ENCODE measurements at regions of chr17 and their contacts with region 1.

Region 1: DNA sequence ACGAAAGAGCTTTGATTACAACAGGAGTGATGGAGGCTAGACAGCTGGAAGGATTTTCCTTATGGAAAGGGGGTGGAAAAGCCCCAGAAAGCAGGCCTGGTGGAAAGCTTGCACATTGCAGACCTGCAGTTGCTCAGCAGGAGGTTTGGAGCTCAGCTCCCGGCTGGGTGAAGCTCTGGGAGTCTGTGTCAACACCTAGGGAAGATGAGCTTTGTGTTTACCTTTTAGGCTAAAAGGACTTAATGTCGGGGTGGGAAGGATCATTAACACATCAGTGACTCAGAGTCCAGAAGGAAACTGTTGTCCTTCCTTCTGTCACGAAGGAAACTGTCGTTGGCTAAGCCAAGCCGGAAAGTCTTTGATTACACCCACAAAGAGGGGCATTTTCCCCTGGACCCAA is 48.2 kb downstream of the RAP1GAP2 start:
- DNase-seq: no peak
- ATAC-seq: no peak
- H3K4me3 ChIP-seq: no peak overlapping the region
- H3K4me3 Mint-ChIP-seq: no peak overlapping the region
- H3K27ac ChIP-seq: no peak overlapping the region
- H3K27ac Mint-ChIP-seq: no peak overlapping the region
- H3K4me1 ChIP-seq: no peaks in the 10 kb centered on the region
- H3K4me1 Mint-ChIP-seq: peaks cover 11% of the 10 kb centered on the region
- H3K27me3 ChIP-seq: no peaks in the 10 kb centered on the region
- H3K27me3 Mint-ChIP-seq: peaks cover 3% of the 10 kb centered on the region
- CTCF ChIP-seq: no peak

Region 2: DNA sequence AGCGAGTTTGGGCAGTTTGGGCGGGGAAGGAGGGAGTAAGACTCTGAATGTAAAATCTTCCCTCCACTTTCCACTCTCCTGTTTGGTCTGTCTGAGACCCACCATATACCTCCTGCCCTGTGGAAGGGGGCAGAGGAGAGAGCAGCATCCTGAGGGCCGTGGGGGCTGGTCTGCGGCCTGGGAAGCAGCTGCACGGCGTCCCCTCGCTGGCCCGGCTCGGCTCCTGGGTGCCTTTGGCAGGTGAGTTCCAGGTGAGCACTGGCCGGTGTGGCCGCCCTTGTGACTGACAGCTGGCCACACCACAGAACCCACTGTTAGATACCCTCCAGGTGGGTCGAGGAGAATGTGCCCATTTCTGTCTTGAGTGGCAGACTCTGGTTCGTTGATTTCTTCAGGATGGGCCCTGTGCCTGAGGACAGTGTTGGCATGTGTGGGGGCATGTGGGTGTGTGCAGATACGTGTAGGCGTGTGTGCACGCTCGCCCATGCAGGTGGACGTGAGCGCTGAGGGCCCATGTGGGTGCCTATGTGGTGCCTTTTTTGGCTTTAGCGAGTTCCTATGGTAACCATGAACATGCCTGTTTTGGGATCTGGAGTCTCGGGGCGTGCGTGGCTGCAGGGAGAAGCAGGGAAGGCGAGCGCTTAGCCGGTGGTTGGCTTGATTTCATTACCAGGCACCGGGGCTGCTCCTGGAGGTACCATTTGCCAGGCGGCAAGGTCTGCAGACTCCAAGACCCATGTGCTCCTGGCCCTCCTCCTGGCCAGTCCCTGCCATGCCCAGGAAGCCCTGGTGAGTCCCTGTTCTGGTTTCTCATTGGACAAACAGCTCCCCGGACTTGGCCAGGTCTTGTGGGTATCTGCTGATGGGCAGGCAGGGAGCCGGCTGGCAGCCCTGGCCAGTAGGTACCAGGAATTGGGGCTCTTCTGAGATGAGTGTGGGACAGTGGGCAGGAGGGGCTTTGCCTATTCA is 35.8 kb before region 1 on chr17:
- CTCF ChIA-PET with region 1: no interaction called
- POLR2A ChIA-PET with region 1: no interaction called
- intact Hi-C with region 1: no loop called
- DNase-seq: no peak
- ATAC-seq: no peak
- H3K4me3 ChIP-seq: no peak overlapping the region
- H3K4me3 Mint-ChIP-seq: no peak overlapping the region
- H3K27ac ChIP-seq: no peak overlapping the region
- H3K27ac Mint-ChIP-seq: no peak overlapping the region
- H3K4me1 ChIP-seq: peaks cover 3% of the 10 kb centered on the region
- H3K4me1 Mint-ChIP-seq: peaks cover 25% of the 10 kb centered on the region
- H3K27me3 ChIP-seq: no peaks in the 10 kb centered on the region
- H3K27me3 Mint-ChIP-seq: no peaks in the 10 kb centered on the region
- CTCF ChIP-seq: no peak

Region 3: DNA sequence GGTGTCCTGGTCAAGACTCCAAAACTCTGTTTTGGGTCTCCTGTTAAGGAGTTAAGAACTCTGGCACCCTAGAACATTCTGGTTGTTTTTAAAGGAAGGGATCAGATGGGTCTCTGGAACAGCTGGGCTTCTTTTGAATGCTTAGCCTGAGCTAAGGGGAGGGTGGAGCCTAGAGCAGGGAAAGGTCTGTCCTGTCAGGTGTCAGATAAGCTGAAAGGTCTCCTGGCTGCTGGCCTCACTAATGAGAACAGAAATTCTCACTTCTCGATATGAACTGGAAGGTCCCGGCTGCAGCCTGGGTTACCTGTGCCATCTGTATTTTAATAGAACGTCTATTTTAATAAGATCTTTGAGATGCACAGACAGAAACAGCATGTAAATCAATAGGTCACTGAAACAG is 20.8 kb after region 1 on chr17:
- CTCF ChIA-PET with region 1: interaction called, 10 read pairs
- POLR2A ChIA-PET with region 1: interaction called, 3 read pairs
- intact Hi-C with region 1: no loop called
- DNase-seq: no peak
- ATAC-seq: no peak
- H3K4me3 ChIP-seq: no peak overlapping the region
- H3K4me3 Mint-ChIP-seq: no peak overlapping the region
- H3K27ac ChIP-seq: no peak overlapping the region
- H3K27ac Mint-ChIP-seq: no peak overlapping the region
- H3K4me1 ChIP-seq: no peaks in the 10 kb centered on the region
- H3K4me1 Mint-ChIP-seq: peaks cover 3% of the 10 kb centered on the region
- H3K27me3 ChIP-seq: no peaks in the 10 kb centered on the region
- H3K27me3 Mint-ChIP-seq: no peaks in the 10 kb centered on the region
- CTCF ChIP-seq: no peak

Region 4: GRCh38 chr17:2929881-2930533 is 85.6 kb after region 1 on chr17:
- CTCF ChIA-PET with region 1: interaction called, 12 read pairs
- POLR2A ChIA-PET with region 1: no interaction called
- intact Hi-C with region 1: loop called in 1 of 2 experiments (anchors 1 kb)
- DNase-seq: peak in 5 of 9 experiments; percentile 15 to 62 (median 35)
- ATAC-seq: no peak
- H3K4me3 ChIP-seq: no peak overlapping the region
- H3K4me3 Mint-ChIP-seq: no peak overlapping the region
- H3K27ac ChIP-seq: no peak overlapping the region
- H3K27ac Mint-ChIP-seq: no peak overlapping the region
- H3K4me1 ChIP-seq: peaks cover 7% of the 10 kb centered on the region
- H3K4me1 Mint-ChIP-seq: peaks cover 14% of the 10 kb centered on the region
- H3K27me3 ChIP-seq: no peaks in the 10 kb centered on the region
- H3K27me3 Mint-ChIP-seq: no peaks in the 10 kb centered on the region
- CTCF ChIP-seq: peak; percentile 48

Region 5: GRCh38 chr17:3012926-3013581 is 168.6 kb after region 1 on chr17:
- CTCF ChIA-PET with region 1: interaction called, 167 read pairs
- POLR2A ChIA-PET with region 1: no interaction called
- intact Hi-C with region 1: loop called in 1 of 2 experiments (anchors 1 kb)
- DNase-seq: peak in 8 of 9 experiments; percentile 28 to 81 (median 60)
- ATAC-seq: peak; percentile 88
- H3K4me3 ChIP-seq: no peak overlapping the region
- H3K4me3 Mint-ChIP-seq: no peak overlapping the region
- H3K27ac ChIP-seq: no peak overlapping the region
- H3K27ac Mint-ChIP-seq: no peak overlapping the region
- H3K4me1 ChIP-seq: no peaks in the 10 kb centered on the region
- H3K4me1 Mint-ChIP-seq: no peaks in the 10 kb centered on the region
- H3K27me3 ChIP-seq: no peaks in the 10 kb centered on the region
- H3K27me3 Mint-ChIP-seq: no peaks in the 10 kb centered on the region
- CTCF ChIP-seq: peak; percentile 71

Region 6: DNA sequence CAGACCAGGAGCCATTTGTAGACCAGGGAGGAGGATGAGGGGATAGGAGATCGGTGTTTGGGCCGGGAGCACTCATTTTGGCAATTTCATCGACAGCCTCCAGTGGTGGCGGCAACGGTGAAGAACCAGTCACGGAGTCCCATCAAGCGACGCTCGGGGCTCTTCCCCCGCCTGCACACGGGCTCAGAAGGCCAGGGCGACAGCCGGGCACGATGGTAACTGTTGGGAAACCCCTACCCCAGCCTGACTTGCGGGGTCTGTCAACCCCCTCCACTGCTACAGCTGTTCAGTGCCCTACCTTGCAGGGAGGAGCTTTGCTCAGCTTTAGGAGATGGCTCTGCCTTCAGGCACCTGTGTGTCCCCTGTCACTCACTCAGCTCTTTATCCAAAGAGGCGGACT is 176.0 kb after region 1 on chr17:
- CTCF ChIA-PET with region 1: interaction called, 167 read pairs
- POLR2A ChIA-PET with region 1: no interaction called
- intact Hi-C with region 1: no loop called
- DNase-seq: no peak
- ATAC-seq: no peak
- H3K4me3 ChIP-seq: no peak overlapping the region
- H3K4me3 Mint-ChIP-seq: no peak overlapping the region
- H3K27ac ChIP-seq: no peak overlapping the region
- H3K27ac Mint-ChIP-seq: no peak overlapping the region
- H3K4me1 ChIP-seq: no peaks in the 10 kb centered on the region
- H3K4me1 Mint-ChIP-seq: no peaks in the 10 kb centered on the region
- H3K27me3 ChIP-seq: no peaks in the 10 kb centered on the region
- H3K27me3 Mint-ChIP-seq: no peaks in the 10 kb centered on the region
- CTCF ChIP-seq: no peak

Region 7: GRCh38 chr17:3647769-3648555 is 803.5 kb after region 1 on chr17:
- CTCF ChIA-PET with region 1: no interaction called
- POLR2A ChIA-PET with region 1: no interaction called
- intact Hi-C with region 1: loop called in 1 of 2 experiments (anchors 10 kb)
- DNase-seq: peak in 6 of 9 experiments; percentile 17 to 47 (median 32)
- ATAC-seq: peak; percentile 63
- H3K4me3 ChIP-seq: no peak overlapping the region
- H3K4me3 Mint-ChIP-seq: no peak overlapping the region
- H3K27ac ChIP-seq: no peak overlapping the region
- H3K27ac Mint-ChIP-seq: no peak overlapping the region
- H3K4me1 ChIP-seq: no peaks in the 10 kb centered on the region
- H3K4me1 Mint-ChIP-seq: no peaks in the 10 kb centered on the region
- H3K27me3 ChIP-seq: no peaks in the 10 kb centered on the region
- H3K27me3 Mint-ChIP-seq: no peaks in the 10 kb centered on the region
- CTCF ChIP-seq: no peak

Measured in CD8-positive, alpha-beta T cell (primary cell).